Activated naive CD8-positive, alpha-beta T cell treated with anti-CD3 and anti-CD28 coated beads, Interleukin-2, amount 10 ng/mL, durations not matched to agents 7 days and 5 days (primary cell): ENCODE measurements at regions of chr4 and their contacts with region 1.

Region 1: DNA sequence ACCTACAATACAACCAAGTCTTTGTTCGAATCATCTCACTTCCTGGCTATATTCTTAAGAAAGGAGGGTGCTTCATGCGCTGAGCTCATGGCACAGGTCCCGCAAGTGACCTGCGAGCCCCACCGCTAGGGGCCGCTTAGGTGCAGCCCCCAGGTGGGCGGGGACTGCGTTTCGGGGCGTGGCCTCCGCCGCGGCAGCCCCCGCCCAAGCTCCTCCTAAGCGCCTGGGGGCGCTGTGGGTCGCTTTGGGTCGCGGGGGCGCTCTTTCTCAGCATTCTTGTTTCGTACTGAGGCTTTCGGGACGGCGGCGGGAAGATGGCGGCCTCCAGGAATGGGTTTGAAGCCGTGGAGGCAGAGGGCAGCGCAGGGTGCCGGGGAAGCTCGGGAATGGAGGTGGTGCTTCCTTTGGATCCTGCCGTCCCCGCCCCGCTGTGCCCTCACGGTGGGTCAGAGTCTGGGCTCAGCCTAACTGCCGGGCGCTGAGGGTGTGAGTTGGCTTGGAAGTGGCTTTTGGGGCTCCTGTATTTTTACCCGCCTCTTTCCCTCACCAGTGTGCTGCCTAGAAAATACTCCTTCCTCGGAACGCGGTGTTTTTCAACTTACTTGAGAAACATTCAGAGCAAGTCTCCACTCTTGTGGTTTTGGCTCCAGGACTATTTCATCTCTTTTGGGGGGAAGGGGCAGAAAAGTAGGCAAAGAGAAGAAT is at the start of gene ZCCHC4:
- DNase-seq: peak; percentile 97
- ATAC-seq: peak; percentile 97
- H3K4me3 Mint-ChIP-seq: peak within 1 kb of the TSS; percentile 99
- H3K27ac Mint-ChIP-seq: peak within 1 kb of the TSS; percentile 95
- H3K4me1 Mint-ChIP-seq: peaks cover 23% of the 10 kb centered on the region
- H3K27me3 Mint-ChIP-seq: peaks cover 7% of the 10 kb centered on the region
- total RNA-seq, gene ZCCHC4: 12.2 to 12.7 TPM

Region 2: DNA sequence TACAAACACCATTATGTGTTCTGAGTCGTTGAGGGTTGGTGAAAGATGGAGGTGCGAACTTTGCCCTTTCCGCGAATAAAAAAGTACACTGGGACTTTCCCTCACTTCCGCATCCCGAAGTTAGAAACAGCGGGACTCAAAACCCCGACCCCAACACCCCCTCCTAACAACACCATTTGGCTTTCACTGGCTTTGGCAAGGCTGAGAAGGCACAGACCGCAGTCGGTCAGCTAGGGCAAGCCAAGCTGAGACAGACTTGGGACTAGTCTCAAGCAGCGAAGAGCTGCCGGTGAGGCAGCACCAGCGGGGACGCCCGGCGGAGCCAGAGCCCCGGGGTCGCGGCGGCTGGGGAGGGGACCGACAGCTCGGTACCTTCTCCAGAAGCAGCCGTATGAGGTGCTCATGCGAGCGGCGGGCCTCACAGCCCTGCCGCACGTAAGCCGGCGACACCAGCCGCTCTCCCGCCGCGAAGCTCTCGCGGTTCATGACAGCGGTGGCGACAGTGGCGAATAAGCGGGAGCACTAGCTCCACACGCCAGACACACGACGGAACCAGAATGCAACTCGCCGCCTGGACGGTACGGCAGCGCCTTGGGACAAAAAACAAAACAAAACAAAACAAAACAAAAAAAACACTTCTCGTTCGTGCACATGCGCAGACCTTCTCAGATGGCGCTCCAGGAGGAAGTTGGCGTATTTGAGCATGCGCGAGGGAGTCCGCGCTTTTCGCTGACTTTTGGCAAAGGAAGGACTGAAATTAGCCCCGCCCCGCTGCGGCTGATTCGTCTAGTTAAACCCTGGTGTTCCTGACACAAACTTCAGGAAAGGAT is 152.5 kb before region 1 on chr4 and contains the start of gene SEPSECS:
- POLR2A ChIA-PET with region 1: interaction called, 22 read pairs
- DNase-seq: peak; percentile 87
- ATAC-seq: peak; percentile 87
- H3K4me3 Mint-ChIP-seq: peak within 1 kb of the TSS; percentile 95
- H3K27ac Mint-ChIP-seq: peak within 1 kb of the TSS; percentile 93
- H3K4me1 Mint-ChIP-seq: peaks cover 22% of the 10 kb centered on the region
- H3K27me3 Mint-ChIP-seq: no peaks in the 10 kb centered on the region
- total RNA-seq, gene SEPSECS: 15.1 to 15.5 TPM

Region 3: DNA sequence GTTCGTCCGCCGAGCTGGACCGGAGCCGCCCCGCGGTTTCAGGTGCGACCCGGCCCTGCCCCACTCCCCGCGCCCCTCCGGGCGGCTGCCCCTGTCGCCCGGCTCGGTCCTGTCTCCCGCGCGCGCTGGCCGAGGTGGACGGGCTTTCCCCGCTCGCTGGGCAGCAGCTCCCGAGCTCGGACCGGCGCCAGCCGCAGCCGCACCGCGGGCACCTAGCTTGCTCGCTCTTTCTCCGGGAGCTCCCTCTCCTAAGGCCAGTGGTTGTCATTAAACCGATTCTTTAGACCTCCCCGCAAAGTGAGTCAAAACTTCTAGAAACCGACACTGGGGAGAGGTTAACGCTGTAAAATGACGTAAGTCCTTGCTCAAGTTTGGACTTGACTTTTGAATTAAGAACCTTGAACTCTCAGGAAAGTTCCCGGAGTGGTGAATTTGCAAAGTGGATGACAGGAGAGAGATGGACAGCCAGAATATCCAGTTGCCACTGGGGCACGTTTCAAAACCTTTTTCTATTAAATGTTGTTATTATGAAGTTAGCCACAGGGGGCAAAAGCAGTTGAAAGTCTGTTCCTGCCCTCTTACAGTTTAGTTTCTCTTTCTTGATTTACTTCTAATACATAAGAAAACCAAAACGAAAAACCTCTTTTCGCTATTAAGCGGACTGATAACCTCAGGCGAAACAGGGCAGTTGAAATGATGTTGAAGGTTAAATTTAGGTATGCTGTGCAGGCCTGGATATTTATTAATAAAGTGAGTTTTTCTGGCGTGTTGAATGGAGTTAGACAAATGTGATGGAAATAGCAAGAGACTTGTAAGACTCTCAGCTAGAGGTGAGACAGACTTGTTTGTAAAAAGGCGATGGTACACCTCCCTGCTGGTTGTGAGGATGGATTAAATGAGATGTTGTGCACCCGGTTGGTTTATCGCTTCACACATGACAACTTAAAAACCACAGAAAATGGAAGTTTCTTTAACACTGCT is 78.0 kb before region 1 on chr4:
- POLR2A ChIA-PET with region 1: interaction called, 44 read pairs
- DNase-seq: no peak
- ATAC-seq: peak; percentile 28
- H3K4me3 Mint-ChIP-seq: peak overlapping the region; percentile 93
- H3K27ac Mint-ChIP-seq: peak overlapping the region; percentile 95
- H3K4me1 Mint-ChIP-seq: peaks cover 33% of the 10 kb centered on the region
- H3K27me3 Mint-ChIP-seq: no peaks in the 10 kb centered on the region

Region 4: DNA sequence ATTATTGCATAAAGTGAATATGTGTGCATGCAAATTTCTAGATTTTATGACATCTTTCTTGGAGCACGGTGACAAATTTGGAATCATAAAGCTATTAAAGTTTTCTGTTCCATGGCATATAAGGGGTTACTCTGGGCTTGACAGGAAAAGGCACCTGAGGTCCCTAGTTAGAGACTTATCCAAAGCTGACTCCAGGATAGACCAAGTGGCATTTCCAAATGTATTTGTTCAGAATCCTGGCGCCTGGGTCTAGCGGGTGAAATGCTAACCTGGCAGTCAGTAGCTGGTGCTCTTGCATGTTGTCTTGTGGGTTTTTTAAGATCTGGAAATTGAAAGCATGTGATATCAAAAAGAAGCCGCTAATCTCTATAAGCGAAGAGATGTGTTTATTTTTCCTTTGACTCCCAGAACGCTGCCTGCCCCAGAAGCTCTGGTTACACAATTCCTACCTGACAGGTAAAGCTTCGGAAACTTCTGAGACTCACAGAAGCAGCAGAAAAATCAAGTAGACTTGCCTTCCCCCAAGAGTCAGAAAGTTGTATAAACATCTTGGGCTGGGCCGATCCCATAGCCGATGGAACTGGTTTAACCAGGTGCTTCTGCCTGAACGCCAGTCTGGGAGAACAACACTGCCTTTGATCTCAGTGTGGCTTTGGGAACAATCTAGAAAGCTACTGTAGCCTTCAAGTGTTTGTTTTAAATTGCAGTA is 13.0 kb before region 1 on chr4:
- POLR2A ChIA-PET with region 1: no interaction called
- DNase-seq: no peak
- ATAC-seq: no peak
- H3K4me3 Mint-ChIP-seq: no peak overlapping the region
- H3K27ac Mint-ChIP-seq: no peak overlapping the region
- H3K4me1 Mint-ChIP-seq: no peaks in the 10 kb centered on the region
- H3K27me3 Mint-ChIP-seq: peaks cover 14% of the 10 kb centered on the region

Region 5: GRCh38 chr4:25330905-25331808 is 18.5 kb after region 1 on chr4:
- POLR2A ChIA-PET with region 1: interaction called, 22 read pairs
- DNase-seq: no peak
- ATAC-seq: peak; percentile 80
- H3K4me3 Mint-ChIP-seq: peak overlapping the region; percentile 86
- H3K27ac Mint-ChIP-seq: peak overlapping the region; percentile 98
- H3K4me1 Mint-ChIP-seq: peaks cover 12% of the 10 kb centered on the region
- H3K27me3 Mint-ChIP-seq: no peaks in the 10 kb centered on the region

Region 6: DNA sequence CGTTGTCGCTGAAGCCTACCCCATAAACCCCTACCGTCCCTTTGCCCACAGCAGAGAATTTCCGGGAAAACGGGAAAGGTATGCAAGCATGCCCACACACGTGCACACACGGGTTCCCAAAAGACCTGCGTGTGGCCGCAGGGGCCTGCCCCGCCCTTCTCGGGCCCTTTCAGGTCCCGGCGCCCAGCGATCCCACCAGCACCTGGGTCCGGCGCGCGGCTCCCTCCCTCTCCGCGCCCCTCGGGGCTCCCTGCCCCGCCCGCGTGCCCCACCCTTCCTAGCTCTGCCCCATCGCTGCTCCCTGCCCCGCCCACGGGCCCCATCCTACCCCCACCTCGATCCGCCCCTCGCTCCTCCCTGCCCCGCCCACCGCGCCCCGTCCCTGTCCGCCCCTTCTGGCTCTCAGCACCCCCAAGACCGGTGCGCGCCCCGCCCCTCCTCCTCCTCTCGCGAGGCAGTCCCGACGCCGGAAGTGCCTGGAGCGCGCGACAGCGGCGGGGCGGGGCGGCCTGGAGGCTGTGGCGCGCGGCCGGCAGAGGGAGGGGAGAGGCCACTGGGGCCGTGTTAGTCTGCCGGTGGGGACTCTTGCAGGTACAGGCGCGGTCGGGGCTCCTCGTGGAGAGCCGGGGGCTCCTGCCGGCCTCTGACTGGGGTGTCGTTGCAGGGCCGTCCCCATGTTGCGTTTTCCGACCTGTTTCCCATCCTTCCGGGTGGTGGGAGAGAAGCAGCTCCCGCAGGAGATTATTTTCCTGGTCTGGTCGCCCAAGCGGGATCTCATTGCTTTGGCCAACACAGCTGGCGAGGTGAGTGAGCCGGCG is 64.3 kb after region 1 on chr4 and contains the start of gene ANAPC4:
- POLR2A ChIA-PET with region 1: interaction called, 10 read pairs
- DNase-seq: peak; percentile 98
- ATAC-seq: peak; percentile 94
- H3K4me3 Mint-ChIP-seq: no peak within 1 kb of the TSS
- H3K27ac Mint-ChIP-seq: peak within 1 kb of the TSS; percentile 93
- H3K4me1 Mint-ChIP-seq: peaks cover 8% of the 10 kb centered on the region
- H3K27me3 Mint-ChIP-seq: no peaks in the 10 kb centered on the region
- total RNA-seq, gene ANAPC4: 49.8 to 52.8 TPM

Region 7: DNA sequence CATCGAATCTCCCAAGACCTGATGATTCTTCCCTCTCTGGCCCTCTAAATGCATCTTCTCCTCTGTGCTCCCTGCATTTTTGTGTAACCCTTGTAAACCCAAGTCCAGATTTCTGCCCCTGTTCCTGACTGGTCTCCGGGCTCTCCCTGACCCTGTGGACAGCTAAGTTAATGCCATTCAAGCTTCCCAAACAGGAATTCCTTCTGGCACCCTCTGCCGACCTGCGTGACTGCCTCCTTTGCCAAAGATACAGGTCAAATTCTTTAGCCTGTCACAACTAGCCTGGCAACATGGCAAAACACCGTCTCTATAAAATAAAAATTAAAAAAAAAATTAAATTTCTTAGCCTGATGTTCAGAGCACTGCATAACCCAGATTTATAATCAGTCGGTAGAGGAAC is 199.9 kb after region 1 on chr4:
- POLR2A ChIA-PET with region 1: no interaction called
- DNase-seq: no peak
- ATAC-seq: no peak
- H3K4me3 Mint-ChIP-seq: no peak overlapping the region
- H3K27ac Mint-ChIP-seq: no peak overlapping the region
- H3K4me1 Mint-ChIP-seq: no peaks in the 10 kb centered on the region
- H3K27me3 Mint-ChIP-seq: peaks cover 8% of the 10 kb centered on the region